ENCODE measurements at regions of chr6 and their contacts with region 1.

Region 1: GRCh38 chr6:32971581-32972352 is 3.4 kb downstream of the BRD2 start:
- DNase-seq: peak; percentile 100
- H3K4me3 ChIP-seq: peak overlapping the region; percentile 83 to 96 (median 91)
- H3K27ac ChIP-seq: peak overlapping the region; percentile 99
- H3K4me1 ChIP-seq: peaks cover 29% of the 10 kb centered on the region
- H3K27me3 ChIP-seq: no peaks in the 10 kb centered on the region
- CTCF ChIP-seq: no peak
- POLR2A ChIP-seq: peak; percentile 100

Region 2: DNA sequence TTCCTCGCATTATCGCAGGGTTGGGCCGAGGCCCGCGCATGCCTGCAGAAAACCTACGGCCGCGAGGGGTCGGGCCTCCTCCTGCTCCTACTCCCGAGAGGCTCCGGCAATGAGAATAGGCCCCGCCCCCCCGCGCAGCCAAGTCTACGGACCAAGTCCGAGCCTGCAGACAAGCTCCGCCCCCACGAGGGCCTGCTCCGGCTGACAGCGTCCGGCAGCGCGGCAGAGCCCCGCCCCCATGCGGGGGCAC is 776.2 kb before region 1 on chr6:
- CTCF ChIA-PET with region 1: no interaction called
- POLR2A ChIA-PET with region 1: no interaction called
- dilution Hi-C with region 1: no loop called
- intact Hi-C with region 1: loop called (anchors 1 kb)
- DNase-seq: peak; percentile 100
- H3K4me3 ChIP-seq: no peak overlapping the region
- H3K27ac ChIP-seq: peak overlapping the region; percentile 99
- H3K4me1 ChIP-seq: peaks cover 36% of the 10 kb centered on the region
- H3K27me3 ChIP-seq: no peaks in the 10 kb centered on the region
- CTCF ChIP-seq: peak; percentile 21 to 57
- POLR2A ChIP-seq: no peak

Region 3: GRCh38 chr6:32589598-32590449 is 381.9 kb before region 1 on chr6 and contains the start of gene HLA-DRB1:
- CTCF ChIA-PET with region 1: no interaction called
- POLR2A ChIA-PET with region 1: no interaction called
- dilution Hi-C with region 1: no loop called
- intact Hi-C with region 1: no loop called
- DNase-seq: peak; percentile 23
- H3K4me3 ChIP-seq: no peak within 1 kb of the TSS
- H3K27ac ChIP-seq: no peak within 1 kb of the TSS
- H3K4me1 ChIP-seq: no peaks in the 10 kb centered on the region
- H3K27me3 ChIP-seq: peaks cover 0 to 1% of the 10 kb centered on the region in 2 experiments
- CTCF ChIP-seq: no peak
- POLR2A ChIP-seq: no peak
- total RNA-seq, gene HLA-DRB1: not detected in 2 replicates

Region 4: DNA sequence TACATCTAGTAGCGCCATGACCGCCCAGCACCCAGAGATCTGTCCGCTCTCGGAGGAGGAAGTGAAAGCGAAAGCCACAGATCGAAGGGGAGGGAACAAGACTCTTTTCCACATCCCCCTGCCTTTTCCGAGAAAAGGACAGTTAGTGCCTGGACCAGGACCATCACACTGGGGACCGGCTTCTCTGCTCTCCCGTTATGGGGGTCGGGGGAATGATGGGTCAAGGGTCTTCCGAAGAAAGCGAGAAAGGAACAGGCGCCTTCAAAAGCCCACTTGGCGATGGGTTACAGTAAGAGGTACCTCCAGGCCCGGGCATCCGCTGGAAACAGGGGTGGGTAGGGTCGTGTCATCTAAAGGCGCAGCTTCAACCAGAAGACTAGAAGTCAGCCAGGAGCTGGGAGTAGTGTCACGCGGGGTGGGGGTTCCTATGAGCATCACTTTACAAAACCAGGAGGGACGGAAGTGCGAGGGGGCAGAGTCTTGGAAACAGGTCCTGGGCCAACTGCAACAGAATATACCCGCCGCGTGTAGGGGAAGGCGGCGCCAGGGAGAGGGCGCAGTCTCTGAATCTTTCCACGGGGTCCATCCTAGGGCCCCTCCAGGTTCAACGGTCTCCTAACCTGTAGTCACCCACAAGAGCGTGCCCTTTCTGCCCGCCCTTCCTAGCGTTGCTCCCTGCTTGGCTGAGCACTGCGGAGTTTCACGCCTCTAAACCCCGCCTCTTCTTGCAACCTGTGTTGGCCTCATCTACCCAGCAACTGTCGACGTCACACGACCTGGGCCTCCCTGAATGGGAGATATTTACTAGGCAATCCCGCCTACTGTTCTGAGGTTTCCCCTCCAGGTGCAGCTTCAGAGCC is 127.6 kb before region 1 on chr6 and contains the start of gene PSMB8:
- CTCF ChIA-PET with region 1: interaction called, 15 read pairs
- POLR2A ChIA-PET with region 1: interaction called, 4 read pairs
- dilution Hi-C with region 1: no loop called
- intact Hi-C with region 1: loop called (anchors 5 kb)
- DNase-seq: peak; percentile 96
- H3K4me3 ChIP-seq: peak within 1 kb of the TSS; percentile 51 to 77 (median 63)
- H3K27ac ChIP-seq: peak within 1 kb of the TSS; percentile 41
- H3K4me1 ChIP-seq: peaks cover 5% of the 10 kb centered on the region
- H3K27me3 ChIP-seq: no peaks in the 10 kb centered on the region
- CTCF ChIP-seq: no peak
- POLR2A ChIP-seq: peak; percentile 47
- total RNA-seq, gene PSMB8: 25.7 and 40.1 TPM in 2 replicates

Region 5: DNA sequence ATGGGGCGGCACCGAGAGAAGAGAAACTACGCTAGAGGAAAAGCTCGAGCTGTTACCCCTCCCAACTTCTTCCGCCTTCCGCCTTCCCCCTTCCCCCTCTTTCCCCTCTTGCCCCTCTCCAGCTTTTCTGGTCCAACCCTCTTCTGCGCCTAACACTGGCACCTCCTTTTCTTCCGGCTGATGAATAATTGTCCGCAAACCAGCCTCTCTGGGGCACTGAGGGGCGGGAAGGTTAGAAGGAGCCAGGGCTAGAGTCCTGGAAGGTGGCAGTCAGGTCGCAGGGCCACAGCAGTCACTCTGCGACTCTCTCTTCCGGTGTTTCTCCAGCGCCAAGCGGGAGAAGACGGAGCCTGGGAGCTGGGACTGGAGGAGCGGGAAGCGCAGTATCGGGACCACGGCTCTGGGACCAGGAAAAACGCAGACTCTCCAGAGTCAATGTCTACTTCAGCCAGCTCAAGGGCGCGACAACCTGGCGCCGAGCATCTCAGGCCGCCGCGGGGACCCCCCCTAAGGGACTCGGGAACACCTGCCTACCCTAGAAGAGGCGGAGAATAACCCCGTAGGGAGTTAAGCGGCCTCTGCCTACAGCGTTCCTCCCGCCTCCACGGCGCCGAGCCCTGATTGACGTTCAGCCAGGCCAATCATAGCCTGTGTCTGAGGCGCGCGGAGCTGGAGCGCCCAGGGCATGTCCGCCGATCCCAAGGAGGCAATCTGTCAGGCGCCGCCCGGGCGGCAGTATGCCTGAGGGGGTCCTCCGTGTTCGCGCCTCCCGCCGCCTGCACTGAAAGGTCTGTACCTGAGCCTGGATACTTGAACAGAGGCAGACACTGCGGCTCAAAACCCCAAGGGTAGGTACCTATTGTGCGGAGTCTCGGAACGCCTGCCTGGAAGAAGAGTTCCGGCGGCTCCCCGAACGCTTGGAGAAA is 77.4 kb before region 1 on chr6:
- CTCF ChIA-PET with region 1: interaction called, 7 read pairs
- POLR2A ChIA-PET with region 1: interaction called, 35 read pairs
- dilution Hi-C with region 1: no loop called
- intact Hi-C with region 1: loop called (anchors 1 kb)
- DNase-seq: peak; percentile 98
- H3K4me3 ChIP-seq: peak overlapping the region; percentile 24 to 67 (median 61)
- H3K27ac ChIP-seq: peak overlapping the region; percentile 45
- H3K4me1 ChIP-seq: peaks cover 17% of the 10 kb centered on the region
- H3K27me3 ChIP-seq: peaks cover 0 to 1% of the 10 kb centered on the region in 2 experiments
- CTCF ChIP-seq: no peak
- POLR2A ChIP-seq: peak; percentile 72

Region 6: GRCh38 chr6:32940656-32941213 is 31.0 kb before region 1 on chr6 and contains the start of gene HLA-DMB:
- CTCF ChIA-PET with region 1: interaction called, 4 read pairs
- POLR2A ChIA-PET with region 1: interaction called, 30 read pairs
- dilution Hi-C with region 1: no loop called
- intact Hi-C with region 1: loop called (anchors 2 kb)
- DNase-seq: peak; percentile 88
- H3K4me3 ChIP-seq: no peak within 1 kb of the TSS
- H3K27ac ChIP-seq: no peak within 1 kb of the TSS
- H3K4me1 ChIP-seq: peaks cover 7% of the 10 kb centered on the region
- H3K27me3 ChIP-seq: peaks cover 35 to 58% of the 10 kb centered on the region in 2 experiments
- CTCF ChIP-seq: no peak
- POLR2A ChIP-seq: no peak
- total RNA-seq, gene HLA-DMB: 0.39 TPM in 1 of 2 replicates, not detected in the other

Region 7: DNA sequence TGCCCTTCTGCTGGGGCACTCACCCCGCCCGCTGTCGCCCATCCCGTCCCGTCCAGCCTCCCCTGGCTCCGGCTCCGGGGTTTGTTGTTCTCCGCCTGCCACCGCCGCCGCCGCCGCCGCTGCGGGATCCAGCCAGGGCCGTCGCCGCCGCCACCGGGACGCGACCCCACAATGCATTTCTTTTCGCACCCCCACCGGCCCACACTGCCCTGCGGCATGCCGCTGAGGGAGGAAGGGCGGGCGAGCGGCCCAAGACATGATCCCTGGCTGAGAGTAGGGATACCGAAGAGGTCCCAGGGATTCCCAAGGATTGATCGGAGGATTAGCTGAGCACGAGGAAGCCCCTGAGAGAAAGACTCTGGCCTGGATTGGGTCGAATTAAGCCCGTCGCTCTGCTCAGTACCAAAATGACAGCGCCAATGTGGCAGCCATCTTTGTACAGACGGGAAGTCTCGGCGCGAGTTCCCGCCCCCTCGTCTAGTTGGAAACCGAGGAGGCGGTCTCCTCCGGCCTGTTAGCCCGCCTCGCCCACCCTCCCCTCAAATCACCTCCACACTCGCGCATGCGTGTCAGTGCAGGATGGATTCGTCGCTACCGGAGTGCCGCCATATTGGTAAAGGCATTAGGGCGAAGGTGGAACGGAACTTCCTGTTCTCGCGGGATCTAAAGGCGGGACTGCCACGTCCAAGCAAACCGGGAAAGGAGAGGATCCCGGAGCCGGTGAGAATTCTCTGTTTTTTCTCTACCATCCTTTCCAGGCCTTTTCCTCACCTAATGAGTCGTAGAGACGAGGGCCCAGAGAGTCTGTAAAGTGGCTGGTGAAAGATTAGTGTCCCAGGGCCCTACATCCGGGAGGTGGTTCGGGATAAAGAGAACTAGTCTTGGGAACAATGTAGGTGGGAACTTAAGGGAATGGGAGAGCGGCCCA is 228.7 kb after region 1 on chr6 and contains the starts of genes RXRB and SLC39A7:
- CTCF ChIA-PET with region 1: no interaction called
- POLR2A ChIA-PET with region 1: interaction called, 3 read pairs
- dilution Hi-C with region 1: no loop called
- intact Hi-C with region 1: loop called (anchors 5 kb)
- DNase-seq: peak; percentile 100
- H3K4me3 ChIP-seq: peak within 1 kb of the TSS; percentile 75 to 92 (median 76)
- H3K27ac ChIP-seq: peak within 1 kb of the TSS; percentile 95
- H3K4me1 ChIP-seq: peaks cover 30% of the 10 kb centered on the region
- H3K27me3 ChIP-seq: no peaks in the 10 kb centered on the region
- CTCF ChIP-seq: no peak
- POLR2A ChIP-seq: peak; percentile 77
- total RNA-seq, gene RXRB: 43.4 and 45.6 TPM in 2 replicates
- total RNA-seq, gene SLC39A7: 129 and 138 TPM in 2 replicates

Region 8: GRCh38 chr6:33417903-33418689 is 446.3 kb after region 1 on chr6 and contains the start of gene CUTA:
- CTCF ChIA-PET with region 1: no interaction called
- POLR2A ChIA-PET with region 1: no interaction called
- dilution Hi-C with region 1: no loop called
- intact Hi-C with region 1: loop called (anchors 10 kb)
- DNase-seq: peak; percentile 100
- H3K4me3 ChIP-seq: peak within 1 kb of the TSS; percentile 36 to 63 (median 50)
- H3K27ac ChIP-seq: peak within 1 kb of the TSS; percentile 64
- H3K4me1 ChIP-seq: peaks cover 20% of the 10 kb centered on the region
- H3K27me3 ChIP-seq: peaks cover 12 to 16% of the 10 kb centered on the region in 2 experiments
- CTCF ChIP-seq: peak in 1 of 2 donors; percentile 18
- POLR2A ChIP-seq: peak; percentile 80
- total RNA-seq, gene CUTA: 133 TPM in 2 replicates

Measured in endothelial cell of umbilical vein (primary cell).